Endothelial cell of umbilical vein (primary cell): ENCODE measurements at regions of chr11 and their contacts with region 1.

Region 1: GRCh38 chr11:29119707-29120695 is 896.8 kb downstream of the KCNA4 start:
- DNase-seq: peak; percentile 99
- H3K4me3 ChIP-seq: peak overlapping the region in 2 of 3 experiments; percentile 25 to 62
- H3K27ac ChIP-seq: peak overlapping the region; percentile 100
- H3K4me1 ChIP-seq: peaks cover 33% of the 10 kb centered on the region
- H3K27me3 ChIP-seq: no peaks in the 10 kb centered on the region
- CTCF ChIP-seq: no peak
- POLR2A ChIP-seq: peak; percentile 74

Region 2: DNA sequence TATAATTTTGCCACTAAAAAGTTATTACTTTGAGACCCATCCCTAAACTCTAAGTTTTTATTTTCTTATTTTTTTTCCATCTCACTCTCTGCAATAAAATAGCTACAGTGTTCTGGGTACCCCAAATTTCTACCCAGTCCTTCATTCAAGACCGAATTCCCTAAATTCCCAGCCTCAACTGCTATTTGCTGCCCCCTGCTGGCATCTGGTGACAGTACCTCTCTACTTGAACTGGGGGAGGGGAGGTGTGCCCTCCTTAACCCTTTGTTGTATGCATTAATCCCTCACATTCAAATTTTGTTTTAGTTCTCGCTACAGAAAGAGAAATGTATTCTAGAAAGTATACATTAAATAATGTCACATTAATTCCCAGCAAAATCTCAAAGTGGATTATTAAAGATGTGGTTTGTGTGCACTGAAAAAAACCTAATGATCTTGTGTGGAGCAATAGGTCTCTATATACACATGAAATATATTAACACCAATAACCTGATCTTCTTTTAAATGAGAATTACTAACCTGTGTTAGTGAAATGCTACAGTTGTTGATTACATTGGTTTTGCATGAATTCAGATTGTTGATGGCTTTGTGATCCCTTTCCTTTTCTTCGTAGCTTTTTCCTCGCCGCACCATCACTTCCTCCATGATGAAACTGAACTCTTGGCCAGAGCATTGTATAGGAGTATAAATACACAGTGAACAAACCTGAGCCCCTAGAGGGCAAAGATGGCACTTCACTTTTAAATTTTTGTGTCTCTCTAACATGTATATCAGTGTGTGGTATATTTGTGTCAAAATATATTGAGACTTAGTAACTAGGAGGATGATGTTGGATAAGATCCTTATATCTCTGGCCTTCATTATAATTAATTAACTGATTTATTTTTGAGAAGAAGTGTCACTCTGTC is 421.8 kb before region 1 on chr11:
- CTCF ChIA-PET with region 1: no interaction called
- POLR2A ChIA-PET with region 1: interaction called, 5 read pairs
- dilution Hi-C with region 1: no loop called
- intact Hi-C with region 1: loop called (anchors 1 kb)
- DNase-seq: peak; percentile 60
- H3K4me3 ChIP-seq: no peak overlapping the region
- H3K27ac ChIP-seq: no peak overlapping the region
- H3K4me1 ChIP-seq: peaks cover 21% of the 10 kb centered on the region
- H3K27me3 ChIP-seq: no peaks in the 10 kb centered on the region
- CTCF ChIP-seq: peak; percentile 73 to 80
- POLR2A ChIP-seq: no peak

Region 3: DNA sequence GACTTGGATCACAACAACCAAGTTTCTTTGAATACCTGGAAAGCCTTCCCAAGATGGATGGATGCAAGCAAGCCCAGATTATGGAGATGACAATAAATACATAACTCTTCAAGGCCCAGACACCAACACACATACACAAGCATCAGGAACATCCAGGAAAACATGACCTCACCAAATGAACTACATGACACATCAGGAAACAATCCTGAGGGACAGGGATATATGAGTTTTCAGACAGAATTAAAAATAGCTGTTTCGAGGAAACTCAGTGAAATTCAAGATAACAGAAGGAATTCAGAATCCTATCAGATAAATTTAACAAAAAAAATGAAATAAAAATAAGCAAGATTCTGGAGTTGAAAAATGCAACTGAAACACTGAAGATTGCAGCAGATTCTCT is 352.4 kb before region 1 on chr11:
- CTCF ChIA-PET with region 1: no interaction called
- POLR2A ChIA-PET with region 1: no interaction called
- dilution Hi-C with region 1: no loop called
- intact Hi-C with region 1: loop called (anchors 1 kb)
- DNase-seq: peak; percentile 74
- H3K4me3 ChIP-seq: no peak overlapping the region
- H3K27ac ChIP-seq: peak overlapping the region; percentile 82
- H3K4me1 ChIP-seq: peaks cover 15% of the 10 kb centered on the region
- H3K27me3 ChIP-seq: no peaks in the 10 kb centered on the region
- CTCF ChIP-seq: no peak
- POLR2A ChIP-seq: no peak

Region 4: DNA sequence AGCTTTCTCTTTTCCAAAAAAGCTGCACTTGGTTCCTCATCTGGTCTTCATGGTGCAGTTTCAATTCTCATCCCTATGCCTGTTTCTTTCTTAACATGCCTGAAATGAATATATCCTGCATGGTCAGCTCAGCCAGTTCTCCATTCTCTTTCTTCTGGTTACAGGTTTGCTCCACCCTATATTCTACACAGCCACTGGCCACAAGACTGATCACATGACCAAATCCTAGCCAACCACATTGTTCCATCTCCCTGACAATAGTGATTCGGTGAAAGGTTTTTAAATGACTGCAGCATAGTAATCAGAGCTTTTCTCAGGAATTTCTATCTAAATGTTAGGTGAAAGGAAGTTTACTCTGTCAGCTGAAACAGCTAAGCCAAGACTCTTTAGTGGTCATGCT is 120.4 kb before region 1 on chr11:
- CTCF ChIA-PET with region 1: no interaction called
- POLR2A ChIA-PET with region 1: no interaction called
- dilution Hi-C with region 1: no loop called
- intact Hi-C with region 1: loop called (anchors 5 kb)
- DNase-seq: no peak
- H3K4me3 ChIP-seq: no peak overlapping the region
- H3K27ac ChIP-seq: no peak overlapping the region
- H3K4me1 ChIP-seq: peaks cover 18% of the 10 kb centered on the region
- H3K27me3 ChIP-seq: no peaks in the 10 kb centered on the region
- CTCF ChIP-seq: no peak
- POLR2A ChIP-seq: no peak

Region 5: DNA sequence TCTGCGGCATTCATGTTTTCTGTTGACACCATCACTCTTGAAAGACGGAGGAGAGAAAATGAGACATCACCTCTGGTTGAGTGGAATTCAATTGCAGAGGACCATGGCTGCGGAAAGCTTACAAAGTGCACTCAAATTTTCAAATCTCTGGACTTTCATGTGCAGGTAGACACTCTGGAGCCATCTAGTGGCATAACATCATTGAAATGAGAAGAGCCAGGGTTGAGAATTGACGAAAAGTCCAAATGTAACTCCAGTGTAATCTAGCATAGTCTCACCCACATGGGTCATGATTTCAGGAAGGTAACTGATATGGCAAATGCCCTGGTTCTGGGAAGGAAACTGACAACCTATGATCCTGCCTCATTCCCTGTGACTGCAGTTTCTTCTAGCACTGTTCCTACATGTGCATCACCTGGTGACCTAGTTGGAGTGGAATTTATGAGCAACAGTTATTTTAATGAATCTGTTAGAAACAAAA is 209.0 kb after region 1 on chr11:
- CTCF ChIA-PET with region 1: interaction called, 8 read pairs
- POLR2A ChIA-PET with region 1: no interaction called
- dilution Hi-C with region 1: no loop called
- intact Hi-C with region 1: loop called (anchors 2 kb)
- DNase-seq: peak; percentile 75
- H3K4me3 ChIP-seq: no peak overlapping the region
- H3K27ac ChIP-seq: no peak overlapping the region
- H3K4me1 ChIP-seq: peaks cover 7% of the 10 kb centered on the region
- H3K27me3 ChIP-seq: no peaks in the 10 kb centered on the region
- CTCF ChIP-seq: peak; percentile 63 to 66
- POLR2A ChIP-seq: no peak

Region 6: DNA sequence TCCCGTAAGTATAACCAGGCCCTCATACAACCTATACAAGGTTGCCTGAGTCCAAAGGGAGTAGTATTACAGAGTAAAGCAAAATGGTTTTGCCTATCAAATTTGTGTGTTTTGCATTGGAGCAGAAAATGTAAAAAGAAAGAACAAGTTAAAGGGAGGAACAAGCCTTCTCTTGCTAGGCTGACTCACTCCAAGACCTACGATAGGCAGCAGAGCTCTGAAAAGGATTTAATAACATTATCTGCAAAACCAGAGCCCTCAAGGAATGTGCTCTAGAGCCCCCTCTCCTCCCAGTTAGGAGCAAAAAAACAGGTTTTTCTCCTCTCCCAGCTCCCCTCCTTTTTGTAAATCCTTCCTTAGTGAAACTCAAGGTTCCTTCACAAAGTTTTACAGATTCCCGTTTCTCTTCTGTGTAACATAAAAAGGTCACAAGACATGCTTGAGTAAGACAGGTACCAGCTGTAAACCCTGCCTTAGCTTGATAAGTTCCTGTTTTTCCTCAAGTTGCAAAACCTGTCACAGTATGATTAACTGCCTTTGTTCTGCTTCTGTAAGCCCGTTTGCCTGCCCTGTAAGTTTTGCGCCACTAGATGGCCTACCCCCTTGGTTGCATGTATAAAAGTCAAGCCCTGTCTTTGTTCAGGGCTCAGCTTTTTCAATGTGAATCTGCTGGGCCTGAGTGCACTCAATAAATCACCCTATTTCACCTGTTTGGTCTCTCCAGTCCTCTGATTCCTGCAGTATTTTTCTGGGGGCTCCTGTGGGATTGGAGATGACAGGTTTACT is 398.6 kb after region 1 on chr11:
- CTCF ChIA-PET with region 1: no interaction called
- POLR2A ChIA-PET with region 1: no interaction called
- dilution Hi-C with region 1: no loop called
- intact Hi-C with region 1: no loop called
- DNase-seq: no peak
- H3K4me3 ChIP-seq: no peak overlapping the region
- H3K27ac ChIP-seq: no peak overlapping the region
- H3K4me1 ChIP-seq: no peaks in the 10 kb centered on the region
- H3K27me3 ChIP-seq: no peaks in the 10 kb centered on the region
- CTCF ChIP-seq: no peak
- POLR2A ChIP-seq: no peak